ENCODE measurements at regions of chr10 and their contacts with region 1.

Region 1: GRCh38 chr10:35237766-35238512 is 98.4 kb upstream of the CCNY start:
- DNase-seq: no peak

Region 2: DNA sequence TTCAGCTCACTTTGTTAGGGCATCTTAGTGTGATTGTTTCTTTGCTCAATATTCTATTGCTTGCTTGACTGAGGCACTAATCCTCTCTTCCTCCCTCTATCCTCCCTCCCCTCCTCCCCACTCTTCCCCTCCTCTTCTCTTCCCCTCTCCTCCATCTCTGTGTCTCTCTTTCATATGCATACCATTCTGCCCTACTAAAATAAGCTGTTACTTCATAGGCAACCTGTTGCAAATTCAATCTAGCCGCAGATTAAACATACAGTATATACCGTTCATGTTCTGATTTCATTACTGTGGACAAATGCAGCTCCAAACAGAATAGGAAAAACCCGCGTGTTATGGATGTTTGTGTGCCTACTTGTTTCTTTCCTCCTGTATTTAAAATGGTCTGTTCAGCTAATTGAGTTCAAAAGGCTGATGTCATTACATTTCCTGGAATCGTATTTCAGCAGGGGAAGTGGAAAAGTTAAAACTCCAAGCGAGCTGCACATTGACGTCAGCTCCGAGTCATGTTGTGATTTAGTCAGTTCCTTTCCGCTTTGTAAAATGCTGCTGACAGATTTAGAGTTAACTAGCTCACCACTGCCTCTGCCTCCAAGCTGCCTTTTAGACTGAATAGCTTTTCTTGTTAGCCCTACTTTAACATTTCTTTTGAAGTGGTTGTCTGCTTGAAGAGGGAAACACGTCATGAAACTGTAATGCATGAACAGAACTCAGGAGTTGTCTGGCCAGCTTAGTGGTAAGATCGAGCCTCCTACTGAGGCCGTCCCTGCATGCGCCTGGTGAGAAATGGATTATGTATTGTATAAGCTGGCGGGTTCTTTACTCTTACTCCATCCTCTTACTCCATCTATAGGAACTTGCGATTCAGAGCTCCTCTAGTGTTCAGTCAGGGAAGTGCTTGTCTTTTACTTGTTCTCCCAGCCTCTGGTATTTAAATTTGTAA is 42.3 kb before region 1 on chr10:
- intact Hi-C with region 1: no loop called
- DNase-seq: peak; percentile 89

Region 3: GRCh38 chr10:35355971-35356724 is 118.2 kb after region 1 on chr10:
- intact Hi-C with region 1: no loop called
- DNase-seq: no peak

Region 4: GRCh38 chr10:35600193-35600592 is 362.3 kb after region 1 on chr10:
- intact Hi-C with region 1: loop called in 1 of 2 experiments (anchors 2 kb)
- DNase-seq: no peak

Measured in posterior vena cava (tissue), 2 donors.